Activated CD8-positive, alpha-beta T cell treated with anti-CD3 and anti-CD28 coated beads for 36 hours (primary cell): ENCODE measurements at regions of chr20 and their contacts with region 1.

Region 1: GRCh38 chr20:49278036-49278817 is at the start of gene ZNFX1:
- DNase-seq: peak; percentile 100
- ATAC-seq: peak; percentile 81
- H3K4me3 Mint-ChIP-seq: peak within 1 kb of the TSS; percentile 100
- H3K27ac Mint-ChIP-seq: peak within 1 kb of the TSS; percentile 100
- H3K4me1 Mint-ChIP-seq: peaks cover 45% of the 10 kb centered on the region
- H3K27me3 Mint-ChIP-seq: peaks cover 2% of the 10 kb centered on the region
- CTCF ChIP-seq: no peak
- total RNA-seq, gene ZNFX1: 27.4 to 27.7 TPM

Region 2: DNA sequence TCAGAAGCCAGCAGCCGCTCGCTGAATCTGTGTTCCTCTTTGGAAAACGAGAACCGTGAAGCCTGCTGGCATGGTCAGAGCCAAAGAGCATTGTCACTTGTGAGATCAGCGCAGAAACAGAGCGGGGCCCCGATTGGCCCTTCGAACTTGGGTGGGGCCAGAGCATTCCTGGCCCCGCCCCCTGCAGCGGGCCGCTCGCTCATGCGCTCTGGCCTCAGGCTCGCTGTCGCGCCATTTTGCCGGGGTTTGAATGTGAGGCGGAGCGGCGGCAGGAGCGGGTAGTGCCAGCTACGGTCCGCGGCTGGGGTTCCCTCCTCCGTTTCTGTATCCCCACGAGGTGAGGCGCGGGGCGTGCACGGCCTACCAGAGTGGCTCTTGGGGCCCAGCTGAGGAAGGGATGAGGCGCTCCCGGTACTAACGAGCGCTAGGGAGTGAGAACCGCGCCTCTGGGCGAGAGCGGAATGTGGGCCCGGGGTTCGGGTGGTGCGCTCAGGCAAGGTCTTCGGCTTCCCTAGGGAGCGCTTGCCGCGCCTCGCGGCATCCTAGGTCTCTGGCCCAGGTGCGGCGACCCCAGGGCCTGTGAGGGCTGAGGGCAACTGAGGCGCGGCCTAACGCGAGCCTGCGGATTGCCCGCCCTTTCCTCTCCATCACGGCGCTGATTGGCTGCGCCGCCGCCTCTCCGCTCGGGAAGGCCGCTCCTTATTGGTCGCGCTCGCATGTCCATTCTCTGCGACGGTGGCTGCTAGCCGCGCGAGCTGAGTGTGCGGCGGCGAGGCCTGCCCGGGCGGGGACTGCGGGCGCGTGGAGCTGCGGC is 231.9 kb before region 1 on chr20 and contains the start of gene CSE1L:
- CTCF ChIA-PET with region 1: no interaction called
- POLR2A ChIA-PET with region 1: interaction called, 19 read pairs
- intact Hi-C with region 1: no loop called
- DNase-seq: peak; percentile 95
- ATAC-seq: peak; percentile 90
- H3K4me3 Mint-ChIP-seq: peak within 1 kb of the TSS; percentile 98
- H3K27ac Mint-ChIP-seq: peak within 1 kb of the TSS; percentile 99
- H3K4me1 Mint-ChIP-seq: peaks cover 31% of the 10 kb centered on the region
- H3K27me3 Mint-ChIP-seq: no peaks in the 10 kb centered on the region
- CTCF ChIP-seq: no peak
- total RNA-seq, gene CSE1L: 115 TPM

Region 3: GRCh38 chr20:49245921-49246740 is 32.1 kb before region 1 on chr20:
- CTCF ChIA-PET with region 1: interaction called, 9 read pairs
- POLR2A ChIA-PET with region 1: interaction called, 16 read pairs
- intact Hi-C with region 1: no loop called
- DNase-seq: peak; percentile 40
- ATAC-seq: peak; percentile 90
- H3K4me3 Mint-ChIP-seq: no peak overlapping the region
- H3K27ac Mint-ChIP-seq: peak overlapping the region; percentile 69
- H3K4me1 Mint-ChIP-seq: no peaks in the 10 kb centered on the region
- H3K27me3 Mint-ChIP-seq: no peaks in the 10 kb centered on the region
- CTCF ChIP-seq: no peak

Region 4: DNA sequence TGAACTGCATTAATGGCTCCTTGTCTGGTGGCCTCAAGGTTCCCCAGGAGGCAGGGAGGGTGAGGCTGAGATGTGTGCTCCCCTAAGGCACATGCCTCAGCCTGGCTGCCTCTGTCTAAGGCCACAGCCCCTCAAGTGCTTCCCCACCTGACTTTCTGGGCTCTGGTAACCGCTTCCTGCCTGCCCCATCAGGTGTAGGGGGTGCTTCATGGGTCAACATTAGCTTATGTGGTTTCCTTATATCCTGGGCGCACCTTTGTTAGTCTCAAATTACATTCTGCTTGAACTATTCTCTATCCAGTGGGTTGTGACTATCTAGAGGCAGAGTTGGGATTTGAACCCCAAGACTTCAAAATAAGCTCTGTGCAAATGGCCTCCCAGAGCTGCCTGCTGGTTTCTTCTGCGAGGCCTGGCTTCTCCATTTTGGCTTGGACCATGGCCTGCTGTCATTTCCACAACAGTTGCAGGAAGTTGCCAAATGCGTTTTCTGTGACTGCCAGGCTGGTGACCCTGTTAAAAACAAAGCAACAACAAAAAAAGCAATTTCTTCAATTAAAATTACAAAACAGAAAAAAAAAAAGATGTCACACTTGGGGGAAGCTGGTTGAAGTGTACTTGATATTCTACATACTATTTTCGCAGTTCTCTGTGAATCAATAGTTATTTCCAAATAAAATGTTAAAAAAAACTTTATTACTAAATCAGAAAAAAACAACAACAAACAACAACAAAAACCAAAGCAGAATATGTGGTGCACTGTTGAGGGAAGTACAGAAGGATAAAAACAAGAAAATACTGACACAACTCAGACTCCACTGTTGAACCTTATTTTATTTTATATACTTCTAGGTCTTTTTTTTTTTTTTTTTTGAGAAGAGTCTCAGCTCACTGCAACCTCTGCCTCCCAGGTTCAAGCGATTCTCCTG is 19.6 kb after region 1 on chr20:
- CTCF ChIA-PET with region 1: no interaction called
- POLR2A ChIA-PET with region 1: interaction called, 148 read pairs
- intact Hi-C with region 1: no loop called
- DNase-seq: peak; percentile 42
- ATAC-seq: peak; percentile 80
- H3K4me3 Mint-ChIP-seq: no peak overlapping the region
- H3K27ac Mint-ChIP-seq: peak overlapping the region; percentile 79
- H3K4me1 Mint-ChIP-seq: peaks cover 17% of the 10 kb centered on the region
- H3K27me3 Mint-ChIP-seq: no peaks in the 10 kb centered on the region
- CTCF ChIP-seq: no peak

Region 5: GRCh38 chr20:49594143-49594930 is 316.1 kb after region 1 on chr20:
- CTCF ChIA-PET with region 1: no interaction called
- POLR2A ChIA-PET with region 1: interaction called, 31 read pairs
- intact Hi-C with region 1: no loop called
- DNase-seq: peak; percentile 94
- ATAC-seq: peak; percentile 57
- H3K4me3 Mint-ChIP-seq: peak overlapping the region; percentile 85
- H3K27ac Mint-ChIP-seq: peak overlapping the region; percentile 96
- H3K4me1 Mint-ChIP-seq: peaks cover 85% of the 10 kb centered on the region
- H3K27me3 Mint-ChIP-seq: no peaks in the 10 kb centered on the region
- CTCF ChIP-seq: no peak